GM23248 (cell line): ENCODE measurements at regions of chr11 and their contacts with region 1.

Region 1: DNA sequence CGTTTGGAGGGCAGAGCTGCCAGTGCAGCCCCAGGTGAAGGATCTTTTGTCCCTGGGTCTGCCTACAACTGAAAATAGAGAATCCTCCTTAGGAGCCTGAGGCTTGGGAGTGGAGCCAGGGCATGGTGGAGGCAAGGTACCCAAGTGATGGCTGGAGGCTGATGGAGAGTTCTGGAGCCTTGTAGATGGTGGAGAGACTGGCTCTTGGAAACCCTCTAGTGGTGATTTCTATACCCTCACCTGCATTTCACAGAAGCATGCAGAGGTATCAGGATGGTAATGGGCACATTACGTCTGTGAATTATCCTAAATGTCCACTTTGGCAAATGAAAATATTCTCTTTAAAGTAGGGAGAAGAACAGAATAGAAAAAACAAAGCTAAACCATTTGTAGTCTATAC is 44.4 kb downstream of the INSC start:
- DNase-seq: peak; percentile 77
- H3K4me3 ChIP-seq: no peak overlapping the region
- H3K27ac ChIP-seq: peak overlapping the region; percentile 87
- H3K4me1 ChIP-seq: peaks cover 23% of the 10 kb centered on the region
- H3K27me3 ChIP-seq: no peaks in the 10 kb centered on the region

Region 2: GRCh38 chr11:14606741-14607140 is 552.3 kb before region 1 on chr11:
- in situ Hi-C with region 1: no loop called
- DNase-seq: no peak
- H3K4me3 ChIP-seq: no peak overlapping the region
- H3K27ac ChIP-seq: no peak overlapping the region
- H3K4me1 ChIP-seq: no peaks in the 10 kb centered on the region
- H3K27me3 ChIP-seq: no peaks in the 10 kb centered on the region

Region 3: DNA sequence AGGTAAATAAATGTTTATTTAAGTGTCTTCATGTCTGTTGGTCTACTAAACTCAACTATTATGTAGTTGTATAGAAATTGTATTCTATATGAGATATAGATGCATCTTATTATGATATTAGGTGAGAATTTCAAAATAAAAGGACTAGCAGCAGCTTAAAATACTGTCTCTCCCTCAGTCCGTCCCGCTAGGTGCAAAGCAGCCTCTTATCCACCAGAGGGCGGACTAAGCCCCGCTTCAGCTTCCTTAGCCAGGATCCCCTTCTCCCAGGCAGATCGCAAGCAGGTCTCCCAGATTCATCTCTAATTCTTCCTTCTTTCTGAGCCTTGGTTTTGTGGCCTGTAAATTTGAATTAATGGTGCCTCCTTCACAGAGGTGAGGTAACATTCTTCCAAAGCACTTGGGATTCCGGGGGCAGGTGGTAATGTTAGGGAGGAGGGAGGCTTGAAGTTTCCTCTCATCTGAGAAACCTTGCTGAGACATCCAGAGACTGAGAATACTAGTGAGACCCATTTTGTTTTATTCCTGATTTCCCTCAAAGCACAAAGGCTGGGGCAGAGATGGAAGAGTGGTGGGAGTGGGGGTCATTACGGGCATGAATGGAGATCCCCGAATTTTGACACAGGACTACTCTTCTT is 57.9 kb before region 1 on chr11:
- in situ Hi-C with region 1: loop called (anchors 5 kb)
- DNase-seq: peak; percentile 86
- H3K4me3 ChIP-seq: no peak overlapping the region
- H3K27ac ChIP-seq: no peak overlapping the region
- H3K4me1 ChIP-seq: peaks cover 25% of the 10 kb centered on the region
- H3K27me3 ChIP-seq: no peaks in the 10 kb centered on the region

Region 4: GRCh38 chr11:15208378-15209222 is 49.5 kb after region 1 on chr11:
- in situ Hi-C with region 1: loop called (anchors 10 kb)
- DNase-seq: peak; percentile 80
- H3K4me3 ChIP-seq: no peak overlapping the region
- H3K27ac ChIP-seq: no peak overlapping the region
- H3K4me1 ChIP-seq: no peaks in the 10 kb centered on the region
- H3K27me3 ChIP-seq: no peaks in the 10 kb centered on the region